Caco-2 (cell line): ENCODE measurements at regions of chr12 and their contacts with region 1.

Region 1: GRCh38 chr12:53213348-53213747 is 6.3 kb upstream of the ITGB7 start:
- DNase-seq: peak; percentile 80 to 91
- H3K4me3 ChIP-seq: no peak overlapping the region
- H3K4me3 Mint-ChIP-seq: no peak overlapping the region
- H3K27ac Mint-ChIP-seq: no peak overlapping the region
- H3K4me1 ChIP-seq: peaks cover 7% of the 10 kb centered on the region; the same call in 1 of the 2 replicates
- H3K4me1 Mint-ChIP-seq: peaks cover 14% of the 10 kb centered on the region
- H3K27me3 ChIP-seq: no peaks in the 10 kb centered on the region
- H3K27me3 Mint-ChIP-seq: no peaks in the 10 kb centered on the region
- CTCF ChIP-seq: peak; percentile 96 to 97

Region 2: DNA sequence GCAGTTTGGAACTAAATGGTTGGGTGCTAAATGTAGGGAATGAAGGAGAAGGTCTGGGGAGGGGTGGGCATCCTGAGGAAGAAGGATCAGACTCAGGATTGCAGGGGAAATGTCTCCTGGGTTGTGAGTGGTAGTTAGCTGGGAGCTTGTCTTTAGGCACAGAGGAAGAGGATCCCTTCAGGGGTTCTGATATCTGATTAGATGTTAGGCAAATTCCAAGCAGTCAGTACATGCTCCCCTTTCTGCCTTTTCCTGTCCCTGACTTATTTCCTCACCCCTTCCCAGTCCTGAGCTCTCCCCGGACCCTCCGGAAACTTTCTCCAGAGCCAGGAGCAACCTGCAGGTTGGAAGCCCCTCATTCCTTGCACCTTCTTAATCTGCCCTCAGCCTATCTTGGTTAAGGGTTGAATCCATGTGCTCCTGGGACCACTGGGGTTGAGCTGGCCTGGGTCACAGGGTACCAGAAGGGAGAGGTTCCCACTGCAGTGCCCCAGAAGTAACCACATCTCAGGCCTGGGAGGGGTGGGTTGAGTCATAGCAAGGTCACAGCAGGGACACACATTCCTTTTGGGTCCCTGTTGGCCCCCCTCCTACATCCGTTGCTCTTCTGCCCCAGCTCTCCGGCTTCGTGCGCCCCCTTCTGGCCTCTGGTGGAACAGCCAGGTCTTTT is 114.2 kb before region 1 on chr12:
- CTCF ChIA-PET with region 1: no interaction called
- POLR2A ChIA-PET with region 1: no interaction called
- intact Hi-C with region 1: no loop called
- DNase-seq: peak; percentile 90
- H3K4me3 ChIP-seq: no peak overlapping the region
- H3K4me3 Mint-ChIP-seq: peak overlapping the region; percentile 68
- H3K27ac Mint-ChIP-seq: peak overlapping the region; percentile 49
- H3K4me1 ChIP-seq: peaks cover 36% of the 10 kb centered on the region
- H3K4me1 Mint-ChIP-seq: peaks cover 42% of the 10 kb centered on the region
- H3K27me3 ChIP-seq: no peaks in the 10 kb centered on the region
- H3K27me3 Mint-ChIP-seq: no peaks in the 10 kb centered on the region
- CTCF ChIP-seq: peak; percentile 92 to 93

Region 3: DNA sequence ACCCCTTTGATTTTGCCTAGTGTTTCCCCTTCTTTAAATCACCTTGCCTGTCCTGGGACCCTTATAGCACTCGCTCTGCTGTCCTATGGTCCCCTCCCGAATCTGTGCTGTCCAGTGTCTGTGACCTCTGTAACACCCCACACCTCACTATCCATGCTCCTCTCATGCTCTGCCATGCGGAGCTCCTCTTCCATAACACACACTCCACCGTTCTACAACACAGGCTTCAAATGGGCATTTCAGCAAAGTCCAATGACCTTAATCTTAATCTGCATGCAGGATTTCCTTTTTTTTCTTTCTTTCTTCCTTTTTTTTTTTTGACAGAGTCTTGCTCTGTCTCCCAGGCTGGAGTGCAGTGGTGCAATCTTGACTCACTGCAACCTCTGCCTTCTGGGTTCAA is 84.2 kb before region 1 on chr12:
- CTCF ChIA-PET with region 1: no interaction called
- POLR2A ChIA-PET with region 1: no interaction called
- intact Hi-C with region 1: no loop called
- DNase-seq: no peak
- H3K4me3 ChIP-seq: no peak overlapping the region
- H3K4me3 Mint-ChIP-seq: no peak overlapping the region
- H3K27ac Mint-ChIP-seq: no peak overlapping the region
- H3K4me1 ChIP-seq: no peaks in the 10 kb centered on the region
- H3K4me1 Mint-ChIP-seq: peaks cover 5% of the 10 kb centered on the region
- H3K27me3 ChIP-seq: no peaks in the 10 kb centered on the region
- H3K27me3 Mint-ChIP-seq: peaks cover 5% of the 10 kb centered on the region
- CTCF ChIP-seq: no peak

Region 4: DNA sequence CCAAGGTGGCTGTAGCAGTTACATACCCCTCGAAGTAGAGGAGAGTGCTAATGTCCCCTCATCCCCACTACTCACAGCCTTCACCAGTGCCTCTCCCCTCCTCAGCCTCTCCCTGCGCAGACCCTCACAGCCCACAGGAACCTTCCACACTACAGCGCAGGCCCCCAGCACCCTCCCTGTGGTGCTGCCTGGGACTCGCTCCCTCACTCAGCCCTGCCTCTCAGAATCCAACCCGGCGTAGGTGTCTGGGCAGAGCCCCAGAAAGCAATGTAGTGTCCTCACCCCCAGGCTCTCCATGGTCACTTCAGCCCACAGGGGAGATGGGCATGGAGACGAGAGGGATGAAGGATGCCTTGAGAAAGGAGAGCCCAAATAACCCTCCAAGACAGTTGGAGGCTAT is 43.7 kb before region 1 on chr12:
- CTCF ChIA-PET with region 1: no interaction called
- POLR2A ChIA-PET with region 1: no interaction called
- intact Hi-C with region 1: no loop called
- DNase-seq: no peak
- H3K4me3 ChIP-seq: no peak overlapping the region
- H3K4me3 Mint-ChIP-seq: no peak overlapping the region
- H3K27ac Mint-ChIP-seq: no peak overlapping the region
- H3K4me1 ChIP-seq: peaks cover 3% of the 10 kb centered on the region
- H3K4me1 Mint-ChIP-seq: peaks cover under 1% of the 10 kb centered on the region
- H3K27me3 ChIP-seq: no peaks in the 10 kb centered on the region
- H3K27me3 Mint-ChIP-seq: no peaks in the 10 kb centered on the region
- CTCF ChIP-seq: no peak

Region 5: GRCh38 chr12:53251477-53252348 is 38.4 kb after region 1 on chr12:
- CTCF ChIA-PET with region 1: interaction called, 17 read pairs
- POLR2A ChIA-PET with region 1: interaction called, 3 read pairs
- intact Hi-C with region 1: loop called (anchors 1 kb)
- DNase-seq: peak; percentile 82 to 85
- H3K4me3 ChIP-seq: peak overlapping the region; percentile 81
- H3K4me3 Mint-ChIP-seq: peak overlapping the region; percentile 93
- H3K27ac Mint-ChIP-seq: peak overlapping the region; percentile 84
- H3K4me1 ChIP-seq: peaks cover 18% of the 10 kb centered on the region
- H3K4me1 Mint-ChIP-seq: peaks cover 22% of the 10 kb centered on the region
- H3K27me3 ChIP-seq: no peaks in the 10 kb centered on the region
- H3K27me3 Mint-ChIP-seq: no peaks in the 10 kb centered on the region
- CTCF ChIP-seq: peak in 1 of 2 experiments; percentile 60

Region 6: GRCh38 chr12:53267999-53268647 is 54.8 kb after region 1 on chr12 and contains the start of gene ESPL1:
- CTCF ChIA-PET with region 1: interaction called, 13 read pairs
- POLR2A ChIA-PET with region 1: no interaction called
- intact Hi-C with region 1: loop called (anchors 1 kb)
- DNase-seq: peak; percentile 63 to 76
- H3K4me3 ChIP-seq: peak within 1 kb of the TSS; percentile 75
- H3K4me3 Mint-ChIP-seq: peak within 1 kb of the TSS; percentile 99
- H3K27ac Mint-ChIP-seq: peak within 1 kb of the TSS; percentile 92
- H3K4me1 ChIP-seq: no peaks in the 10 kb centered on the region
- H3K4me1 Mint-ChIP-seq: peaks cover 9% of the 10 kb centered on the region
- H3K27me3 ChIP-seq: no peaks in the 10 kb centered on the region
- H3K27me3 Mint-ChIP-seq: no peaks in the 10 kb centered on the region
- CTCF ChIP-seq: peak in 1 of 2 experiments; percentile 46
- total RNA-seq, gene ESPL1: 32.3 and 34.9 TPM in 2 replicates

Region 7: GRCh38 chr12:53287741-53288216 is 74.4 kb after region 1 on chr12:
- CTCF ChIA-PET with region 1: interaction called, 41 read pairs
- POLR2A ChIA-PET with region 1: interaction called, 3 read pairs
- intact Hi-C with region 1: loop called (anchors 1 kb)
- DNase-seq: peak; percentile 65 to 76
- H3K4me3 ChIP-seq: no peak overlapping the region
- H3K4me3 Mint-ChIP-seq: no peak overlapping the region
- H3K27ac Mint-ChIP-seq: no peak overlapping the region
- H3K4me1 ChIP-seq: no peaks in the 10 kb centered on the region
- H3K4me1 Mint-ChIP-seq: no peaks in the 10 kb centered on the region
- H3K27me3 ChIP-seq: no peaks in the 10 kb centered on the region
- H3K27me3 Mint-ChIP-seq: no peaks in the 10 kb centered on the region
- CTCF ChIP-seq: peak; percentile 72 to 76

Region 8: DNA sequence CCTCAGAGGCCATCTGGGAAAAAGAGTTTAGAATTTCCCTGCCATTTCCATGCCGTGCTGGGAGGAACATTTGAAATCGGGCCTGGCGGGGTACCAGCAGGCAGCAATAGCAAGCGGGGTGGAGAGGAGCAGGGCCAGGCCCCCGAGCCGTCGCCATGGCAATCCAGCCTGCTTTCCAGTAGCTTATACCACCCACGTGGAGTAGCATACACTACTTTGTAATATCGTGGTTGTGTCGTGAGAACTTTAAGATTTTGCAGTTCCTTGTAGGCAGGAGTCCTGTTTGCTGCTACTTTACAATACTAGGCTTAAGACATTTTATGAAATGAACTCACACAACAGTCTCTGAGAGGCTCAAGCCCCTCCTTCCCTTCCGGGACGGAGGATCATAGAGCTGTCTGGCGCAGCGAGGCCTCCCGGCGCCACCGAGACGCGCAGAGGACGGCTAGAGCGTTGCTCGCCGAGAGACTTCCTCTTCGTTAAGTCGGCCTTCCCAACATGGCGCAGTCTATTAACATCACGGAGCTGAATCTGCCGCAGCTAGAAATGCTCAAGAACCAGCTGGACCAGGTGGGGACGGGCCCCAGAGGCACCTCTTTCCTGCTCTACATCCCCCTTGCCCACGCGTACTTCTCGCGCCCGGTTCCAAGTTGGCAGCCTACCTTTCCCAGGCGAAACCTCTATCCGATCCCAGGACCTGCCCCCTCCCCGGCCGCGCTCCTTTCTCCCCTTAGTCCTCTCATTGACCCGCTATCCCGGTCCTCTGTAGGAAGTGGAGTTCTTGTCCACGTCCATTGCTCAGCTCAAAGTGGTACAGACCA is 81.9 kb after region 1 on chr12 and contains the start of gene PFDN5:
- CTCF ChIA-PET with region 1: interaction called, 41 read pairs
- POLR2A ChIA-PET with region 1: no interaction called
- intact Hi-C with region 1: loop called (anchors 2 kb)
- DNase-seq: peak; percentile 84 to 89
- H3K4me3 ChIP-seq: peak within 1 kb of the TSS; percentile 87
- H3K4me3 Mint-ChIP-seq: peak within 1 kb of the TSS; percentile 93
- H3K27ac Mint-ChIP-seq: peak within 1 kb of the TSS; percentile 90
- H3K4me1 ChIP-seq: peaks cover 18% of the 10 kb centered on the region
- H3K4me1 Mint-ChIP-seq: peaks cover 11% of the 10 kb centered on the region
- H3K27me3 ChIP-seq: no peaks in the 10 kb centered on the region
- H3K27me3 Mint-ChIP-seq: no peaks in the 10 kb centered on the region
- CTCF ChIP-seq: no peak
- total RNA-seq, gene PFDN5: 251 and 264 TPM in 2 replicates